PC-9 (cell line): ENCODE measurements at regions of chr17 and their contacts with region 1.

Region 1: DNA sequence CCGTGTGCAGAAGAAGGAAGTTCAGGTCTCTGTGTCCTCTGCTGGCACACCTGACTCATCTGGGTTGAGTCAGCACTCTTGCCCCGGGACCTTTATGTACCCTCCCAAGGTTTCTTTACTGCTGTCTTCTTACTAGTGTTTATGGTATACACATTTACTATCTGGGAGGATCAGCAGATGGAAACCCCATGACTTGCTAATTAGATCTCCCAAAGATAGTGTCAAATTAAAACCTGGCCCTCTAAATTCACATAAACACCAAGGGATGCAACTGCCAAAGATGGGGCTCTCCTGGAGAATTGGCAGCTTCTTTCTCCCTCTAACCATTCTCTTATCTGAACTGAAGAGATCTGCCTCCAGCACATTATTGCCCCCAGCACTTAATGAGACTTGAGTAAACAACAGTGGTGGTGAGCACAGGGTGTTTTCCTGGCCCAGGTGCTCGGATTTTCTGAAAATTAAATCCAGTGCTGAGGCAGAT is 718.1 kb upstream of the SOX9 start:
- DNase-seq: peak; percentile 41 to 72
- H3K4me3 ChIP-seq: no peak overlapping the region
- H3K27ac ChIP-seq: peak overlapping the region; percentile 86
- H3K4me1 ChIP-seq: peaks cover 46% of the 10 kb centered on the region
- H3K27me3 ChIP-seq: no peaks in the 10 kb centered on the region
- CTCF ChIP-seq: no peak

Region 2: DNA sequence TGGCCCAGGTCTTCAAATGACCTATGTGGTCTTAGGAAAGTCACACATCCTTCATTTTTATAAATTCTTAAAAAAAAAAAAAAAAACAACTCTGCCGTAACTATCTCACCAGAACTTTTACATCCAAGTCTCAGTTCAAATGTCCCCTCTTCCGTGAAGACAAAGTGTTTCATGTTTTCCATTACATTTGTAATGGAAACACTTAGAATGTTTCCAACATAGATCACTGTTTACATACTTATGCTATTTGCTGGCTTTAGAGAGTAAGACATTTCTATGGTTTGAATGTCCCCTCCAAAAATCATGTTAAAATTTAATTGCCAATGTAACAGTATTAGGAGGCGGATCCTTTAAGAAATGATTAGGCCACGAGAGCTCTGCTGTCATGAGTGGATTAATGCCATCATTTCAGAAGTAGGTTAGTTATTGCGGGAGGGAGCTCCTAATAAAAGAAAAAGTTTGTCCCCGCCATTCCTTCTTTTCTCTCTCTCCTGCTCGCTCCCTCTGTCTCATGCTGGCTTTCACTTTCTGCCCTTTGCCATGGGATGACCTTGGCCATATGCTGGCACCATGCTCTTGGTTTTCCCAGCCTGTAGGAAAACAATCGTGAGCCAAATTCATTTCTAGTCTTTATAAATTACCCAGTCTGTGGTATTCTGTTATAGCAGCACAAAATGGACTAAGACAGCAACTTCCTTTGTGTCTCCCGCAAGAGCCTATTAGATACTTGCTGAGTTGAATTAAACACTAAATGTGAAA is 169.7 kb before region 1 on chr17:
- CTCF ChIA-PET with region 1: no interaction called
- POLR2A ChIA-PET with region 1: interaction called, 15 read pairs
- intact Hi-C with region 1: no loop called
- DNase-seq: no peak
- H3K4me3 ChIP-seq: no peak overlapping the region
- H3K27ac ChIP-seq: no peak overlapping the region
- H3K4me1 ChIP-seq: no peaks in the 10 kb centered on the region
- H3K27me3 ChIP-seq: no peaks in the 10 kb centered on the region
- CTCF ChIP-seq: no peak

Region 3: GRCh38 chr17:71423871-71424546 is 21.3 kb after region 1 on chr17:
- CTCF ChIA-PET with region 1: no interaction called
- POLR2A ChIA-PET with region 1: no interaction called
- intact Hi-C with region 1: loop called (anchors 1 kb)
- DNase-seq: peak; percentile 59 to 98
- H3K4me3 ChIP-seq: 0 out of 2 replicates have a peak overlapping the region, but pooled peaks have one; percentile 10
- H3K27ac ChIP-seq: peak overlapping the region; percentile 96
- H3K4me1 ChIP-seq: peaks cover 24% of the 10 kb centered on the region
- H3K27me3 ChIP-seq: no peaks in the 10 kb centered on the region
- CTCF ChIP-seq: peak; percentile 30; the same call in 1 of the 2 replicates